Activated CD4-positive, alpha-beta memory T cell treated with anti-CD3 and anti-CD28 coated beads, Interleukin-2, amount 10 ng/mL, durations not matched to agents 7 days and 5 days (primary cell): ENCODE measurements at regions of chr16 and their contacts with region 1.

Region 1: GRCh38 chr16:69150146-69150865 is 17.9 kb downstream of the UTP4 start:
- DNase-seq: peak; percentile 60
- H3K4me3 Mint-ChIP-seq: no peak overlapping the region
- H3K27ac Mint-ChIP-seq: no peak overlapping the region
- H3K4me1 Mint-ChIP-seq: no peaks in the 10 kb centered on the region
- H3K27me3 Mint-ChIP-seq: no peaks in the 10 kb centered on the region

Region 2: GRCh38 chr16:69132424-69133252 is 17.7 kb before region 1 on chr16 and contains the starts of genes CHTF8 and UTP4:
- CTCF ChIA-PET with region 1: interaction called, 12 read pairs
- POLR2A ChIA-PET with region 1: interaction called, 3 read pairs
- DNase-seq: peak; percentile 88
- H3K4me3 Mint-ChIP-seq: peak within 1 kb of the TSS; percentile 93
- H3K27ac Mint-ChIP-seq: peak within 1 kb of the TSS; percentile 81
- H3K4me1 Mint-ChIP-seq: peaks cover 59% of the 10 kb centered on the region
- H3K27me3 Mint-ChIP-seq: no peaks in the 10 kb centered on the region
- total RNA-seq, gene CHTF8: 133 to 138 TPM
- total RNA-seq, gene UTP4: 39.7 to 48.7 TPM

Region 3: GRCh38 chr16:69166221-69166833 is 16.0 kb after region 1 on chr16:
- CTCF ChIA-PET with region 1: interaction called, 16 read pairs
- POLR2A ChIA-PET with region 1: interaction called, 4 read pairs
- DNase-seq: peak; percentile 48
- H3K4me3 Mint-ChIP-seq: no peak overlapping the region
- H3K27ac Mint-ChIP-seq: peak overlapping the region; percentile 69
- H3K4me1 Mint-ChIP-seq: peaks cover 37% of the 10 kb centered on the region
- H3K27me3 Mint-ChIP-seq: no peaks in the 10 kb centered on the region

Region 4: DNA sequence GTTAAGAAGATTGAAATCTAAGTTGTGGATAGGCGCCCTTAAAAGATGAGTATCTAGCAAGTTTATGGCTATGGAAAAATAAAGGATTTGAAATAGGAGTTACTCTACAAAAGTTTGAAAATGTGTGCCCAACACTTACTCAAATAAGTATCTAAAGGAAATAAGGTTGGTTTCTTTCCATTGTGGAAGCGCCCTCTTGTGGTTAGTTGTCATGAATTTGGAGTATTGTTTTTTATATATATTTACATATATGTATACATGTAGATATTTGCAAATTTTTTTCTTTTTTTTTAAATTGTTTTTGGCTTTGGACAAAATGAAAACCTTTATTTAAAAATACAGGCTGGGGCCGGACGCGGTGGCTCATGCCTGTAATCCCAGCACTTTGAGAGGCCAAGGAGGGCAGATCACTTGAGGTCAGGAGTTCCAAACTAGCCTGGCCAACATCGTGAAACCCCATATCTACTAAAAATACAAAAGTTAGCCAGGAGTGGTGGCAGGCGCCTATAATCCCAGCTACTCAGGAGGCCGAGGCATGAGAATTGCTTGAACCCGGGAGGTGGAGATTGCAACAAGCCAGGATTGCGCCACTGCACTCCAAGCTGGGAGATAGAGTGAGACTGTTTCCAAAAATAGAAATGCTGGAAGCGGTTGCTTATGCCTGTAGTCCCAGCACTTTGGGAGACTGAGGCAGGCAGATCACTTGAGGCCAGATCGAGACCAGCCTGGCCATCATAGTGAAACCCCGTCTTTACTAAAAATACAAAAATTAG is 136.8 kb after region 1 on chr16:
- CTCF ChIA-PET with region 1: interaction called, 103 read pairs
- POLR2A ChIA-PET with region 1: interaction called, 6 read pairs
- DNase-seq: no peak
- H3K4me3 Mint-ChIP-seq: no peak overlapping the region
- H3K27ac Mint-ChIP-seq: no peak overlapping the region
- H3K4me1 Mint-ChIP-seq: peaks cover 2% of the 10 kb centered on the region
- H3K27me3 Mint-ChIP-seq: no peaks in the 10 kb centered on the region